Activated CD4-positive, alpha-beta T cell treated with anti-CD3 and anti-CD28 coated beads for 36 hours (primary cell): ENCODE measurements at regions of chr10 and their contacts with region 1.

Region 1: DNA sequence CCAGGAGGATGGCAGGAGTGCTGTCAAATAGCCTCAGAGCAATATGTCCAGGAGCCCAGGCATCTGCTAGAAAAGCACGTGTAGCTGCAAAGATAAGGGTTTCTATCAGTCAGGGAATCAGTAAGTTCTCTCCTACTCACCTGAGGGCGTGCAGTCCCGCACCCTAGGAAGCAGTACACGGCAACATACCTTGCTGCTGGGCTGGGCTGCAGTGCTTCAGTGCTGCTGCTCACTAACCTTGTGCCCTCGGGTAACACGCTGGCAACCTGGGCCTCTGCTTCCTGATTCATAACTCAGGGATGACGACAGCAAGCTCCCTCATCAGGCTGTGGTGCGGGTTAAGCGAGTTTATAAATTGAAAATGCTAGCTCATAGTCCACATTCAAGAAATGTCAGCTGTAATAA is 29.5 kb upstream of the CCNY start:
- DNase-seq: peak; percentile 43
- ATAC-seq: peak; percentile 63
- H3K4me3 Mint-ChIP-seq: no peak overlapping the region
- H3K27ac Mint-ChIP-seq: no peak overlapping the region
- H3K4me1 Mint-ChIP-seq: no peaks in the 10 kb centered on the region
- H3K27me3 Mint-ChIP-seq: peaks cover 25% of the 10 kb centered on the region

Region 2: GRCh38 chr10:35348609-35349388 is 41.9 kb after region 1 on chr10:
- CTCF ChIA-PET with region 1: no interaction called
- POLR2A ChIA-PET with region 1: no interaction called
- intact Hi-C with region 1: loop called in 1 of 2 experiments (anchors 1 kb)
- DNase-seq: no peak
- ATAC-seq: no peak
- H3K4me3 Mint-ChIP-seq: no peak overlapping the region
- H3K27ac Mint-ChIP-seq: no peak overlapping the region
- H3K4me1 Mint-ChIP-seq: peaks cover 81% of the 10 kb centered on the region
- H3K27me3 Mint-ChIP-seq: no peaks in the 10 kb centered on the region